ENCODE measurements at regions of chrX and their contacts with region 1.

Region 1: DNA sequence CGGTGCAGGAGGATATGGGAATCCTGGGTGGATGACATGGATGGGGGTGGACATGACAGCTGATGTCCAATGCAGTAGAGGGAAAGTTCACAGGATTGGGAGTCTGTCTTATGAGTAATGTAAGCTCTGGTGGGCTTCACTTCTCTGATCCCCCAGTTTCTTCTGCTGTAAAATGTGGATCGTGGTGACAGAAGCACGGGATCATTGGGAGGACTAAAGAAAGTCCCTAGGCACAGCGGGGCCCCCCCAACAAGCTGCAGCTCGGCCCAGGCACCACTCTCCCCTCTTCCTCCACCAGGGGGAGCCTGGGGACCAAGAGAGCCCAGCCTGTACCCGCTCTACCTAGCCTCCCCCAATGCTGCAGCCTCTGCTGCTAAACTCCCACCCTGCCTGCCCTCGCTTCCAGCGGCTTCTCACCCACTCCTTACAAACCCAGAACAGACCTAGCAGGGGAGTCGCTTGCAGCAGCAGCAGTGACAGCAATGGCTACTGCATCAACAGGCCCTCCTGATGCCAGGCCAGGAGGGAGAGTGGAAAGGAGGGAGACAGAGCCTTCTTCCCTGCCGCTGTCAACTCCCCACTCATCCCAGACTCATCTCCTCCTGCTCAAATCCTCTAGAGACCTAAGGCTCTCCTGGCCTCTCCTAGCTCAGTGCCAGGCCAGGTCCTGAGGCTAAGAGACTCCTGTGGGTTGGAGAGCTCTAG is 36.1 kb upstream of the IQSEC2 start:
- DNase-seq: no peak
- H3K4me3 ChIP-seq: no peak overlapping the region
- H3K27me3 ChIP-seq: peaks cover 18% of the 10 kb centered on the region
- CTCF ChIP-seq: peak; percentile 81

Region 2: DNA sequence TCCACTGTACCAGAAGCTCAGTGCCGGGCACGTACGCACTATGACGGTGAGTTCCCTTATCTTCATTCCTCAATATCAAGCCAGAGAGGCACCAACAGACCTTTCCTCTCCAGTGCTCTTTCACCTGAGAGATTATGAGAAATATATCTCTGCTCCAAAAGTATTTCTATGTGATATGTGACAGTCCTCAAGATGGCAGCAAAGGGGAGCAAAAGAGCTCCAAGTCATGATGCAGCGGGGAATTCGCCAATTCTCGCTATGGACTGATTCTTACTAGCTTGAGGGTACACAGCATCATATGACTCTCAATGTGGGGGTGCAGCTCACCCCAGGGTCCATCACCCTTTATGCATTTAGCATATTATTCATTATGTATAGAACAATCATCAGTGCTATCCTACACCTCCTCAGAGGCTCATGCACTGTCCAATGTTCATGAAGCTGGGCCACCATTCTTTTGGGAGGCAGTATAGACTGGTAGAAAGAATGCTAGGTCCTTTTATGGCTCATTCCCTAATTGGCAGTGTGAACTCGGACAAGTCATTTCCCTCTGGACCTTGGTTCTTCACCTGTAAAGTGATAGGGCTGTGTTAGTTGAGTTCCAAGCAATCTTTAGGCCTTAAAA is 23.4 kb before region 1 on chrX:
- CTCF ChIA-PET with region 1: interaction called, 14 read pairs
- POLR2A ChIA-PET with region 1: no interaction called
- DNase-seq: no peak
- H3K4me3 ChIP-seq: no peak overlapping the region
- H3K27me3 ChIP-seq: no peaks in the 10 kb centered on the region
- CTCF ChIP-seq: no peak; the same call in 1 of the 2 replicates

Region 3: GRCh38 chrX:53330331-53330730 is 12.8 kb after region 1 on chrX:
- CTCF ChIA-PET with region 1: interaction called, 54 read pairs
- POLR2A ChIA-PET with region 1: no interaction called
- DNase-seq: no peak
- H3K4me3 ChIP-seq: no peak overlapping the region
- H3K27me3 ChIP-seq: peaks cover 9% of the 10 kb centered on the region
- CTCF ChIP-seq: no peak

Region 4: GRCh38 chrX:53445977-53446376 is 128.5 kb after region 1 on chrX:
- CTCF ChIA-PET with region 1: interaction called, 27 read pairs
- POLR2A ChIA-PET with region 1: no interaction called
- DNase-seq: no peak
- H3K4me3 ChIP-seq: no peak overlapping the region
- H3K27me3 ChIP-seq: no peaks in the 10 kb centered on the region
- CTCF ChIP-seq: peak; percentile 68

Measured in BJ (cell line).